OCI-LY7 (cell line): ENCODE measurements at regions of chr3 and their contacts with region 1.

Region 1: DNA sequence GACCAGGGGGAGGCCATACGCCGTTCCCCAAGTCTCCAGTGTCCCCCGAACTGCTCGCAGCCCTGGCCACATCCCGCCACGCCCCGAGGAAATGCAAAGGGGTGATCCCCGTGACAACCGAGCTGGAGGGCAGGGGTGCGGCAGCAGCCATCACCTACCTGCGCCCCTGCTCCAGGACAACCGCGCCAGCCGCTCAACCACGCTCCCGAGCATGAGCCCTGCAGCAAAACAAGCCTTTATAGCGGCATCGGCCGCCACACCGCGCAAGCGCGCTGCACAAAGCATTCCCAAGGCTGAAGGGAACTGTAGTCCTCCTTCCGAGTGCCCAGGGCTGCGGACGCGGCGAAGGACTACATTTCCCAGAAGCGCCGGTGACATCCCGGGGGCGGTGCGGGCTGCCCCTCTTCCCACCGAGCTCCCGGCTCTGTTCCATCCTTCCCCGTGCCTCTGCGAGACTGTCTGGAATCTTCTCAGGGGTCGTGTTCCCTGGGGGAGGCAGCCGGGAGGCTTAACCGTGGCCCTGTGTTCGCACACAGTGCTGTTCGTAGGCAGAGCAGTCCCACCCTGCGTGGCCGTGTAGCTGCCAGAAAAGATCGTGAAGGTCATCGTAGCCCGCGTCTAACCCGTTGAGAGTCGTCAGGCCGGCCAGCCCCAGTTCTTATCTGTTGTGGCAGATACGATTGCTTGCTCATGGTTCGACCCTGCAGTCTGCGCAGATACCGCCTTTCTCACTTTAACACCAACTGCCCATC is at the start of gene ABCC5:
- DNase-seq: peak; percentile 91
- H3K4me3 ChIP-seq: peak within 1 kb of the TSS; percentile 96
- H3K27ac ChIP-seq: peak within 1 kb of the TSS; percentile 31
- H3K4me1 ChIP-seq: peaks cover 23% of the 10 kb centered on the region
- CTCF ChIP-seq: peak; percentile 71
- total RNA-seq, gene ABCC5: 18.1 and 28.5 TPM in 2 replicates

Region 2: GRCh38 chr3:183895296-183895695 is 122.6 kb before region 1 on chr3:
- CTCF ChIA-PET with region 1: interaction called, 4 read pairs
- POLR2A ChIA-PET with region 1: interaction called, 28 read pairs
- intact Hi-C with region 1: loop called (anchors 1 kb)
- DNase-seq: peak; percentile 72
- H3K4me3 ChIP-seq: no peak overlapping the region
- H3K27ac ChIP-seq: no peak overlapping the region
- H3K4me1 ChIP-seq: peaks cover 5% of the 10 kb centered on the region
- CTCF ChIP-seq: peak; percentile 92

Region 3: DNA sequence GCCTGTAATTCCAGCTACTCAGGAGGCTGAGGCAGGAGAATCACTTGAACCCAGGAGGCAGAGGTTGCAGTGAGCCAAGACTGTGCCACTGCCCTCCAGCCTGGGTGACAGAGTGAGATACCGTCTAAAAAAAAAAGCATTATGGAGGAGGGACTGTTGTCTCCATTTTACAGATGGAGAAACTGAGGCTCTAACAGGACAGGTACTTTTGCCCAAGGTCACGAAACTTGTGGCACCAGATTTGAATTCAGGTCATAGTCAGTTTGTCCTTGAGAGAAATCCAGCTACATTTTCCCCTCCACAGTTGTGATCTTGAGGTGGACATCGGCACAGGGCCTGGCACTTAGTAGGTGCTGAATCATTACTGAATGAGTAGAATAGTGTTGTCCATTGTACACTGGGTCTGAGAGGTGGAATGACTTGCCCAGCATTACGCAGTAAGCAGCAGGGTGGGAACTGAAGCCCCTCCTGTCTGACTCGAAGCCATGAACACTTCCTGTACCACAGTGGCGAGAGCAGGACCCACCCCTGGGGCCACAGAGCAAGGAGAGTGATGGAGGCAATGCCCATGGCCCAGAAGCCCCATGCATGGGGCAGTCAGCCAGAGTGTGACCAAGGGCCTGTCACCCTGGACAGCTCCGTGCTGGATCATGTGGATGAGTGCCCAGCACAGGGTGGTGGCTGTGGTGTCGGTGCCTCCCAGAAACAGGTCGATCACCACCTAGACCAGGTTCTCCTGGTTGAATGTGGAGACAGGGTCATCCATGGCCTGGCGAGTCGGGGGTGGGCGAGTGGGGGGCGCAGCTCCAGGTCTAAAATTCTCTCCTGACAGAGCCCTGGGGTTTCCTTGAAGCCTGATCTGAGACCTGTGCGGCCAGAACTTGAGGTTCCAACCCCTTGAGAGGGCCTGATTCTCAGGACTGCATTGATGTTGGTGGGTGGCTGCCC is 112.7 kb before region 1 on chr3:
- CTCF ChIA-PET with region 1: interaction called, 4 read pairs
- POLR2A ChIA-PET with region 1: no interaction called
- intact Hi-C with region 1: loop called (anchors 1 kb)
- DNase-seq: no peak
- H3K4me3 ChIP-seq: no peak overlapping the region
- H3K27ac ChIP-seq: no peak overlapping the region
- H3K4me1 ChIP-seq: no peaks in the 10 kb centered on the region
- CTCF ChIP-seq: no peak

Region 4: DNA sequence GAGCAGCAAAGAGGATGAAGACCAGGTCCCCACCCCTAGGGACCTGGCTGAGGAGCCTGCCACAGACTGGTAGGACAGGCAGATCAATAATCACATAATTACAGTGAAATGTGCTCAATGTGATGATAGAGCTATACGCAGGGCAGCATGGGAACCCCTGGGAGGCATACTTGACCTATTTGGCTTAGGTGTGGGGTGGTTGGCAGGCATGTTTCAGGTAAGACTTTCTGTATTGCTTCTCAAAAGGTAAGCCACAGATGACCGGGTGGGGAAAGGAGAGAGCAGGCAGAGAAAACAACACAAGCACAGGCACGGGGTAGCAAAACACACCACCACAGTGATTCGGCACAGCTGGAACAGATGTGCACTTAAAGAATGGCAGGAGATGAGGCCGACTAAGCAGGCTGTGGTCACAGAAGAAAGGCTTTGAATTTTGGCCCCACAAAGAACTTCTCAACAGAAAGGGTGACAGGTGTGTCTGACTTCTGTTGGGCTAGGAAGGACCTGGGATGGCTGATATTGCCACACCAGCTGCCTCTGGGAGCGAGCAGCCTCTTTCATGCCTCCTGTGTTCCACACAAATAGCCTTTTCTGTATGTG is 64.3 kb before region 1 on chr3:
- CTCF ChIA-PET with region 1: no interaction called
- POLR2A ChIA-PET with region 1: no interaction called
- intact Hi-C with region 1: loop called (anchors 1 kb)
- DNase-seq: peak; percentile 93
- H3K4me3 ChIP-seq: peak overlapping the region; percentile 34
- H3K27ac ChIP-seq: peak overlapping the region; percentile 87
- H3K4me1 ChIP-seq: peaks cover 32% of the 10 kb centered on the region
- CTCF ChIP-seq: no peak

Region 5: DNA sequence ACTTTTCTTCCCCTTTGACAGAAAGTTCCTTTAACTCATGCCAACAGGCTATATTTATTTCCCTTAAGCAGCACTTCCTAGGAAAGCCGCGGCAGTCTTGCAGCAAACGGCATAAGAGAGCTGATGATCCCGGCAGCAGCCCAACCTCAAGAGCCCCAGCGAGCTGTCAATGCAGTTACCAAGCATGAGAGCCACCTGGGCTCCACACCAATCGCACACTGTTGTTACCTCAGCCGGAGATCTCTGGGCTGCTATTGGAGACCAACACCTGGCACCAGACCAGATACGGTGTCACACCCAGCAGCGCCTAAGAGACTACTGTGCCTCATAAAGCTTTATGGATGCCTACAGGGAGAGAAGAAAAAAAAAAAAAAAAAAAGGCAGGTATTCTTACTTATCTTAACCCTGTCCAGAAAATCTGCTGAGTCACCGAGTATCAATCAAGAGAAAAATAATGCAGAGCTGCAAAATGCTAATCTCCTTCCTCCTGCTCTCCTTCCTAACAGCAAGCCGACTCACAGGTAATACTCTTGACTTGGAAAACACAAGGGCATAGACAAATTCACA is 11.8 kb before region 1 on chr3:
- CTCF ChIA-PET with region 1: no interaction called
- POLR2A ChIA-PET with region 1: interaction called, 20 read pairs
- intact Hi-C with region 1: no loop called
- DNase-seq: peak; percentile 72
- H3K4me3 ChIP-seq: no peak overlapping the region
- H3K27ac ChIP-seq: peak overlapping the region; percentile 44
- H3K4me1 ChIP-seq: peaks cover 31% of the 10 kb centered on the region
- CTCF ChIP-seq: no peak

Region 6: DNA sequence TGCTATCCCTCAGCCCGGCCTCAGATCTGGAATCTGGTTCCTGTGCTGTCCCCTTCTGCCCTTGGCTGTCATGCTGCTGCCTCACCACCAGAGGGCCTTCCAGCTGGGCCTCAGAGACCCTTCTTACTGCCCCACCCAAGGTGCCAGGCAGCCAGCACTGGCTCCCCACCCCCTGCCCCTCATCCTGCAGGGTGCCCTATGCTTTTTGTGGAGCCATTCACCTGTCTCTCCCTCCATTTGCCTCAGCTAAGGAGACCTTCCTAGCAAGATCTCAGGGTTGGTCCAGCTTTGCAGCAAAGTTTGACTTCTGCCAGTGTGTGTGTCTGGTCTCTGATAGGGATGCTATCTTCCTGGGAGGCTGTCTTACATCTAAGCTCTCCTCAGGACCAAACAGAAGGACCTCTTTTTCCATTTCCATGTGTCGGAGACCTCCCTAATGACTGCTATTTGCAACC is 209.7 kb after region 1 on chr3:
- CTCF ChIA-PET with region 1: interaction called, 13 read pairs
- POLR2A ChIA-PET with region 1: no interaction called
- intact Hi-C with region 1: no loop called
- DNase-seq: peak; percentile 65
- H3K4me3 ChIP-seq: no peak overlapping the region
- H3K27ac ChIP-seq: no peak overlapping the region
- H3K4me1 ChIP-seq: peaks cover 7% of the 10 kb centered on the region
- CTCF ChIP-seq: peak; percentile 84